ENCODE measurements at regions of chr1 and their contacts with region 1.

Region 1: DNA sequence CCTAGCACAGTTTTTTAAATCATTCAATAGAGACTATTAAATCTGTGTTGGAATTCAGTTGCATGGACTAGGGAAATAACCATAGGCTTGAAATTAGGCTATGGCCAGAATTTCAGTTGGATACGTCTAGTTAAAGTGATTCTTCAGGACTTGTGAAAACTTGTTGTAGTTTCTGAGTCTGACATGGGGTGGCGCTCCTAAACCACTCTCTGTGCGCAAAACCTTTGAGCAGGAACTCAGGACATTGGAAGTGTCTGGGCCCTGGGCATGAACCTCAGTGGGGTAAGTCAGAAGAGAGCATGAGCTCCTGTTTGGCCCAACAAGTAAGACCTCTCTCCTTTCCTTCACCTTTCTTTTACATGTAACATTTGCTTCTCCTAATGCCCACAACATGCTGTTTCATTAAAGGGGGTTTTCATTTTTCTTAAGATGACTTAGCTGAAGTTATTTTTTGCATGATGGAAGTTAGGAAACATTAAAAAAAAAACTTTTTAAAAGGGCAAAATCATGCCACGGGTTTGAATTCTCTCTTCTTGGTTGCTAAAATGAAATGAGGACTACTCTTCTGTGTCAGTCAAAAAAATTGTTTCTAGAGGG is 17.1 kb upstream of the CCDC190 start:
- DNase-seq: peak; percentile 38
- H3K4me3 ChIP-seq: no peak overlapping the region
- H3K27ac ChIP-seq: no peak overlapping the region
- H3K27me3 ChIP-seq: no peaks in the 10 kb centered on the region
- CTCF ChIP-seq: peak; percentile 84

Region 2: DNA sequence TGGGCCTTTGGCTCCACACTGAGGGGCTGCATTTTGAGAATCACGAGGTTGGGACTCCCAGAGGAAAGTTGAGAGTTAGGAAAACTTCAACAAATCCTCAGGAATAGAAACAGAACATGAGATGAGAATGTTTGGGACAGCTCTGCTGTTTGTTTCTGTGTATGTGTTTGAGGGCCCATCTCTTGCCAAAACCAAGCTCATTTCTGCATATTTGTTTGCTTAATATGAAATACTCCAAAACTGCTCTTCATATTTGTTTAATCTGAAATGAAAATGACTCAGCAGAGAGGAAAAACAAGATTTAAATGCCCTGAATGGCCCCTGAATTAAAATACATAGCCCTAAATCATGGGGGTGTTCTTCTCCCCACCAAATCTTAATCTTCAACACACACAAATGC is 167.8 kb before region 1 on chr1:
- CTCF ChIA-PET with region 1: no interaction called
- POLR2A ChIA-PET with region 1: no interaction called
- DNase-seq: no peak
- H3K4me3 ChIP-seq: no peak overlapping the region
- H3K27ac ChIP-seq: peak overlapping the region; percentile 58
- H3K27me3 ChIP-seq: no peaks in the 10 kb centered on the region
- CTCF ChIP-seq: no peak

Region 3: DNA sequence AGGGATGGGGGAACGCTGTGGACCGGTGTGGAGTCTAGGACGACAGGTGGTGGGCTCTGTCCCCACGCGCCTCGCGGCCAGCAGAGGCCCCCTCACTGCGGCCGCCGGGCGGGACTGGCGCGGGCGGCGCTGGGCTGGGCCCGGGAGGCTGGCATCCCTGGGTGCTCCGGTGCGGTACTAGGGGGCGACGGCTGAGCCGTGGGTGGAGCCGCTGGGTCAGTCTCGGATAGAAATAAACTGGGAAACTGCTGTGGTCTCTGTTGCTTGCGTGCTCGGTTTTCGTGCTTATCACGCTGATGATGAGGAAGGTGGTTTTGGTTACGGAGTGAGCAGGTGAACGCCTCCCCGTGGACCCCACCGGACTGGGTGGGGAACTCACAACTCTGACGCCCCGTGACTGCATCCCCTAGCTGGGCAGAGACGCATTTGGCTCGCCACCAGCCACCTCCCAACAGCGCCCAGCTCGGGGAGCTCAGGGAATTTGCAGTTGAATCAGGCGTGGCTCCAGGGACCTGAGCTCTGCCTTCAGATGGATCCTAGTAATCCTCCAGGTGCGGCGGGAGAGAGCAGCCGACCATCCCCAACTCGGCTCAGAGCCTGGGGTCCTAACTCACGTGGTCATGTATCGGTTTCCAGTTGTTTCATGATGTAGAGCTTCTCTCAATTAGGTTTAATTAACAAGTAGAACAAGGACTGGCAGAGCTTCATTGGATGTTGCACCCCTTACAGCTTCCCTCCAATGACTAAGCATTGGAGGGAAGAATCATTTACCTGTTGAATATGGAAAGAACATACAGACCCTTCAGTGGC is 55.5 kb before region 1 on chr1:
- CTCF ChIA-PET with region 1: no interaction called
- POLR2A ChIA-PET with region 1: no interaction called
- DNase-seq: no peak
- H3K4me3 ChIP-seq: peak overlapping the region; percentile 62
- H3K27ac ChIP-seq: no peak overlapping the region
- H3K27me3 ChIP-seq: peaks cover 2% of the 10 kb centered on the region
- CTCF ChIP-seq: no peak

Region 4: GRCh38 chr1:162889989-162890388 is 11.9 kb after region 1 on chr1:
- CTCF ChIA-PET with region 1: interaction called, 24 read pairs
- POLR2A ChIA-PET with region 1: no interaction called
- DNase-seq: no peak
- H3K4me3 ChIP-seq: no peak overlapping the region
- H3K27ac ChIP-seq: no peak overlapping the region
- H3K27me3 ChIP-seq: no peaks in the 10 kb centered on the region
- CTCF ChIP-seq: no peak

Region 5: GRCh38 chr1:162905174-162906158 is 27.4 kb after region 1 on chr1:
- CTCF ChIA-PET with region 1: interaction called, 10 read pairs
- POLR2A ChIA-PET with region 1: no interaction called
- DNase-seq: no peak
- H3K4me3 ChIP-seq: no peak overlapping the region
- H3K27ac ChIP-seq: no peak overlapping the region
- H3K27me3 ChIP-seq: no peaks in the 10 kb centered on the region
- CTCF ChIP-seq: no peak

Region 6: DNA sequence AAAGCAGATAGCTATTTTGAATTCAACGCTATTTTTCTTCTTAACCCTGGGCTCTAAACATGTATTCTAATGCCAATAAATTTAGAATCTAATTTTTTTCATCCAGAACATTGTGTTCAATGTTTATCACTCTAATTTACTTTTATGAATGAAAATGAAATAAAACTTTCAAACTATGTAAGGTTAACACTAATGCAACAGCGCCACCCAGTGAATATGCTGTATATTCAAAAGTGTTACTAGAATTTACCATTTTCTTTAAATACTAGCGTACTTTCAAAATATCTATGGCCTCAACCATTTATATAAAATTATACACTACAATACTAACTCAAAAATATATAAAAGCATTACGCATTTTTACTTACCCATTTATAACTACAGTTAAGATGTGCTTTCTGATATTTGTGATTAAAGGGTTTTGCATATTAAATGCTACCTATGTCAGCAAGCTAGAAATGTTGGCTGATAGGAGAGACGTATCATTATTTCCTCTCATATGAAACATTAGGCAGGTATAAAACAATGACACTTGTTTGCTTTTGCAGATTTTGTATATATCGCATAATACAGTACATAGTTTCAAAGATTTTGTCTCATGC is 437.8 kb after region 1 on chr1:
- CTCF ChIA-PET with region 1: interaction called, 80 read pairs
- POLR2A ChIA-PET with region 1: no interaction called
- DNase-seq: no peak
- H3K4me3 ChIP-seq: no peak overlapping the region
- H3K27ac ChIP-seq: no peak overlapping the region
- H3K27me3 ChIP-seq: no peaks in the 10 kb centered on the region
- CTCF ChIP-seq: peak; percentile 60